ENCODE measurements at regions of chr2 and their contacts with region 1.

Region 1: DNA sequence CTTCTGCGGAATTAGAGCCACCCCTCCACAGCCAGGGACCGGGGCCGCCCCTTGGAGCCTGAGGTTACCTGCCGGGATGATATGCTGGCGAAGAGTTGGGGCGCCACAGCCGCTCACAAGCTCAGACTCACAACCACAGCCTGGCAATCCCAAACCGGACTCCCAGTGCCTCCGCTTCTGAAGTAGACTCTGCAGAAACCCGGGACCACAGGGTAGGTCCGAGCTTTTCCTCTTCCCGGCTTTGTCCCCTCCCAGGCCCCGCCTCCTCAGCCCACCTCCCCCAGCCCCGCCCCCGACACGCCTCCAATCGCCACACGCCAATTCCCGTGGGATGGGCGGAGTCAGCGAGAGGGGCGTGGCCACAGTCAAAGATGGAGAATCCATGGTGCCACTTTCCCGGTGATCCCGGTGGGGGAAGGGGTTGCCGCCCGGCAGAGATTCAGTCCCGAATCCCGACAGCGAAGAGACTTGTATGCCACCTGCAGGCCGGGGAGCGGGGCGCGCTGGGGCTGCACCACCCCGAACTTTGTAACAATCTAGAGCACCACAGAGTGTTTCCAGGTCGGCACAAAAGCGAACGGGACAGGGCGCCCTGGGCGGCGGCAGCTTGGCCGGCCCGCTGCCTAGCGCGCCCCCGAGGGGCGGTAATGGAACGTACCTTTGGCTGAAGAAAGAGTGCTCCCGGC is at the start of gene IDH1:
- DNase-seq: peak; percentile 37
- H3K4me3 ChIP-seq: peak within 1 kb of the TSS; percentile 89
- CTCF ChIP-seq: peak; percentile 56

Region 2: GRCh38 chr2:208240619-208241209 is 14.3 kb before region 1 on chr2:
- CTCF ChIA-PET with region 1: interaction called, 30 read pairs
- POLR2A ChIA-PET with region 1: no interaction called
- DNase-seq: no peak
- H3K4me3 ChIP-seq: no peak overlapping the region
- CTCF ChIP-seq: no peak

Region 3: GRCh38 chr2:208265801-208266552 is 11.0 kb after region 1 on chr2 and contains the start of gene PIKFYVE:
- CTCF ChIA-PET with region 1: interaction called, 96 read pairs
- POLR2A ChIA-PET with region 1: interaction called, 14 read pairs
- DNase-seq: peak; percentile 86
- H3K4me3 ChIP-seq: peak within 1 kb of the TSS; percentile 89
- CTCF ChIP-seq: no peak

Region 4: GRCh38 chr2:208669394-208669793 is 414.4 kb after region 1 on chr2:
- CTCF ChIA-PET with region 1: no interaction called
- POLR2A ChIA-PET with region 1: no interaction called
- DNase-seq: no peak
- H3K4me3 ChIP-seq: no peak overlapping the region
- CTCF ChIP-seq: no peak